ENCODE measurements at regions of chr7 and their contacts with region 1.

Region 1: GRCh38 chr7:26195182-26195581 is 5.4 kb downstream of the HNRNPA2B1 start:
- DNase-seq: peak in 1 of 35 experiments; percentile 35
- ATAC-seq: no peak
- H3K4me3 ChIP-seq: no peak overlapping the region
- H3K4me3 Mint-ChIP-seq: peak overlapping the region; percentile 71 to 96 (median 72)
- H3K27ac ChIP-seq: peak overlapping the region; percentile 47
- H3K27ac Mint-ChIP-seq: peak overlapping the region; percentile 50 to 68
- H3K4me1 ChIP-seq: peaks cover 37 to 65% of the 10 kb centered on the region in 2 experiments
- H3K4me1 Mint-ChIP-seq: peaks cover 69 to 90% (median 74%) of the 10 kb centered on the region in 3 donors
- H3K27me3 ChIP-seq: no peaks in the 10 kb centered on the region
- H3K27me3 Mint-ChIP-seq: peaks cover 0 to 2% of the 10 kb centered on the region in 2 donors

Region 2: DNA sequence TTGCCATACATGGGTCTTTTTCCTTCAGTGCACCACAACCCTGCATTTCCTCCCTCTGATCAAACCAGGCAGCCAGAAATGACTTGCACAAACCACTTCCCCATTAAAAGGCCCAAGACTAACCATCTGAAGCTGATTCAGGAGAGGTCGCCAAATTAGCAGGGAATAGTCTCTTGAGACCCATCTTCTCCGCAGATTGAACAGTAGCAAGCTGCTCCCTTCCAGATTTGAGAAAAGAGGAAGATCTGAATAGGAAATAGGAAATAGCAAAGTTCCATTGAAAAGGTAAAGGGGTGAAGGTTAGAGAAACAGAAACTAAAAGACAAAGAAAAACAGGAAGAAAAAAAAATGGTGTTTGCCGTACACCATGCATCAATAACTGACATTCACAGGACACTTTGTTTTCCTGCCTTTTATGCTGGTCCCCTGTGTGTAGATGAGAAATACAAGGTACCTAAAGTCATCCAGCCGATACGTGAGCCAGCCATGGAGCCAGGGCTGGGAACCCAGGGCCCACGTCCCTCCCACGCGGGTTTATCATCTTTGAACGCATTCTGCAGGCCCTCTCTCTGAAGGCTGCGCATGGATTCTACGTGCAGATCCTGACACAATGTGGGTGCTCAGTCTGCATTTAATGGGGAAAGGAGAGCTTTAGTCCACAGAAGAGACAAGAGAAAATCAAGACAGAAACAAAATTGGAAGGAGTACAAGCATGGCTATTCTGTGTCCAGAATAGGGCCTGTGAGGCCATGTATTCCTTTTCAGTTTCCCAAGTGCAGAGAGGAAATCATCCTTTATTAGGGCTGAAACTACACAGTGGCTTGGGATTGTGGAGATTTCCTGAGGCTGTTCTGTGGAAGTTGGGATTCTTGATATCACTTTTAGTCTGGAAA is 698.5 kb before region 1 on chr7:
- CTCF ChIA-PET with region 1: no interaction called
- POLR2A ChIA-PET with region 1: no interaction called
- DNase-seq: peak in 3 of 35 experiments; percentile 4 to 22 (median 6)
- ATAC-seq: peak; percentile 65 to 77 (median 72)
- H3K4me3 ChIP-seq: no peak overlapping the region
- H3K4me3 Mint-ChIP-seq: peak overlapping the region; percentile 67 to 75 (median 72)
- H3K27ac ChIP-seq: peak overlapping the region; percentile 16
- H3K27ac Mint-ChIP-seq: peak overlapping the region; percentile 93 to 99
- H3K4me1 ChIP-seq: peaks cover 8 to 12% of the 10 kb centered on the region in 2 experiments
- H3K4me1 Mint-ChIP-seq: peaks cover 8 to 11% (median 9%) of the 10 kb centered on the region in 3 donors
- H3K27me3 ChIP-seq: no peaks in the 10 kb centered on the region
- H3K27me3 Mint-ChIP-seq: peaks cover 2 to 3% of the 10 kb centered on the region in 2 donors

Region 3: GRCh38 chr7:26151953-26152781 is 43.0 kb before region 1 on chr7 and contains the start of gene NFE2L3:
- CTCF ChIA-PET with region 1: interaction called, 6 to 10 read pairs
- POLR2A ChIA-PET with region 1: interaction called, 5 to 12 read pairs
- DNase-seq: peak; percentile 57 to 90 (median 71)
- ATAC-seq: peak; percentile 78 to 86 (median 86)
- H3K4me3 ChIP-seq: peak within 1 kb of the TSS; percentile 50 to 58
- H3K4me3 Mint-ChIP-seq: peak within 1 kb of the TSS; percentile 80 to 93 (median 87)
- H3K27ac ChIP-seq: peak within 1 kb of the TSS; percentile 43
- H3K27ac Mint-ChIP-seq: peak within 1 kb of the TSS; percentile 91 to 93
- H3K4me1 ChIP-seq: peaks cover 22 to 52% of the 10 kb centered on the region in 2 experiments
- H3K4me1 Mint-ChIP-seq: peaks cover 54 to 55% (median 54%) of the 10 kb centered on the region in 3 donors
- H3K27me3 ChIP-seq: no peaks in the 10 kb centered on the region
- H3K27me3 Mint-ChIP-seq: no peaks in the 10 kb centered on the region
- total RNA-seq, gene NFE2L3: 1.8 to 6.2 (median 5.1) TPM

Region 4: DNA sequence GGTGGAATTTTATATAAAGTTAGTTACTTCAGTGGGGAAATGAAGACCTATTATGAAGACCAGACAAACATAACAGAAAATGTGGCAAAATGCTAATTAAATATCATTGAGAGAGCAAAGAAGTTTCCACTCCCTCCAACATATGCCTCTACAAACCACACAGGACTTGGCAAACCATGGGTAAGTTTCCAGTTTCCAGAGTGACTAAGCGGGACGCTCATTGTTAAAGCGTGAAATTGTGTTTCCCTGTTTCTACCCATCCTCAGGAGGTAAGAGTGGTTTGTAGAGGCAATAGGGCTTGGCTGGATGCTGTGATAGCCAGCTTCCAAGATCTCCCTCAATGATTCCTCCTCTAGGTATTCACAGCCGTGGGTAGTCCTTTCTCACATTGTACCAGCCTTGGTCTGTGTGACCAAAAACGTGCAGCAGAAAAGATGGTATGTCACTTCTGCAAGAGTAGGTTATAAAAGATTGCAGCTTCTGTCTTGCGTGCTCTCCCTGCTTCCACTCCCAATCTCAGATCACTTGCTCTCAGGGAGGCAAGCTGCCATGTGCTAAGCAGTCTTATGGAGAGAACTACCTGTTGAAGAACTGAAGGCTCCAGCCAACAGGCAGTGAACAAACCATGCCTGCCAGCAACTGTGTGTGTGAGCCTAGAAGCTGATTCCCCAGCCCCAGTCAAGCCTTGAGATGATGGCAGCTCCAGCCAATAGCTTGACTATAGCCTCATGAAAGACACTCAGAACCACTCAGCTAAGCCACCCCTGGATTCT is 42.0 kb after region 1 on chr7:
- CTCF ChIA-PET with region 1: no interaction called
- POLR2A ChIA-PET with region 1: no interaction called
- DNase-seq: no peak
- ATAC-seq: no peak
- H3K4me3 ChIP-seq: no peak overlapping the region
- H3K4me3 Mint-ChIP-seq: no peak overlapping the region
- H3K27ac ChIP-seq: no peak overlapping the region
- H3K27ac Mint-ChIP-seq: no peak overlapping the region
- H3K4me1 ChIP-seq: no peaks in the 10 kb centered on the region
- H3K4me1 Mint-ChIP-seq: no peaks in the 10 kb centered on the region
- H3K27me3 ChIP-seq: peaks cover 0 to 6% of the 10 kb centered on the region in 2 experiments
- H3K27me3 Mint-ChIP-seq: peaks cover 4 to 9% of the 10 kb centered on the region in 2 donors

Measured in T-cell (primary cell).